Activated CD8-positive, alpha-beta T cell treated with anti-CD3 and anti-CD28 coated beads, Interleukin-2, amount 10 ng/mL, durations not matched to agents 7 days and 5 days (primary cell): ENCODE measurements at regions of chr12 and their contacts with region 1.

Region 1: DNA sequence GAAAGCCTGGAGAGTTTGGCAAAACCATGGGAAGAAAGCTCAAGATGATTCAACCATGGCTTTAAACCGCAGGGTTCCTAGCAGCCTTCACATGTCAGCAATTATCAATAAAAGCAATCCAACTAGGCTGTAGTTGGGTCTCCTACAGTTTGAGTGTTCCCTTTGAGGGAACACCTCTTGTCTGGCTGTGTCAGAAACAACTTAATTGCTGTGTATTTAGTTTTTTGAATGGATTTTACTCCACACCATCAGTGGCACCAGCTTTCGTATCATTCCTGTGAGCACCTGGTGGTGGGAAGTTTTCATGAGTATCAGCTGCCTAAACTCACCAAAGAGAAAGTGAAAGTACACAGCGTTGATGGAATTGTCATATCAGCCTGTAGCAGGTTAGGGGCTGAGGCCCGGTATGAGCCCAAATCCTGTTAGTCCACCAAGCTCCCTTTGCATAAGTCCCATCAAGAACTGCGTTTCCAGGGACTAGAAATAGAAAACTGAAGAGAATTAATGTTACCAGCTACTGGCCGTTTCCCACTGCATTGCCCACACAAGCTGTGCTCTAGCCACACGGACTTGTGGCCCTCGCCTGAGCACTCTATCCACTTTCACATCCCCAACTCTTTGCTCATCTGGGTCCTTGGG is 10.9 kb upstream of the IL26 start:
- DNase-seq: peak; percentile 57
- ATAC-seq: peak; percentile 78
- H3K4me3 Mint-ChIP-seq: peak overlapping the region; percentile 79
- H3K27ac Mint-ChIP-seq: peak overlapping the region; percentile 91
- H3K4me1 Mint-ChIP-seq: peaks cover 56% of the 10 kb centered on the region
- H3K27me3 Mint-ChIP-seq: no peaks in the 10 kb centered on the region

Region 2: DNA sequence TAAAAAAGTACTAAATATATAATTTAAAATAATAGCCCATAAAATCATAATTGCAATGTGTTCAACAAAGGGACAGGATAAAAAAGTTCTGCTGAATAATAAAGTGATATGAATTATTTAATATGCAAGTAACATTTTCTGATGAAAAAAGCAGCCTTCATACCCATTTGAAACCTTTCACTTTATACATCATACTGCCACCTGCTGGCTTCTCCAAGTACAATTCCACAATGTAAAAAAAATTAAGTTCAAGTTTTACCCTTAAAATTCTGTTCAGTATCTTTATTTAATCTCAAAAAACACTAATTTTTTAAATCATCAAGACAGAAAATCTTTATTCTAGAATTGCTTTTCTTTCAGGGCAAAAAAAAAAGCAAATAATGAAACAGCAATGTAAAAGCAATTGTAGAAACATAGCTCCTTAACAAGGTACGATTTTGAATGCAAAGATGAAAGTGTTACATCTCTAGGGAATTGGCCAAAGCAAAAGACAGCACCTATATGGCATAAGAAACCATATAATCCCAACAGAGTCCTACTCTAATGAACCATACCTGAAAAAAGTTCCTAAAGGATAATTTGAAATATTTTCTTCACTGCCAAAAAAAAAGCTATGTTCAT is 80.6 kb after region 1 on chr12:
- CTCF ChIA-PET with region 1: interaction called, 18 read pairs
- POLR2A ChIA-PET with region 1: no interaction called
- DNase-seq: peak; percentile 72
- ATAC-seq: no peak
- H3K4me3 Mint-ChIP-seq: no peak overlapping the region
- H3K27ac Mint-ChIP-seq: no peak overlapping the region
- H3K4me1 Mint-ChIP-seq: no peaks in the 10 kb centered on the region
- H3K27me3 Mint-ChIP-seq: no peaks in the 10 kb centered on the region

Region 3: DNA sequence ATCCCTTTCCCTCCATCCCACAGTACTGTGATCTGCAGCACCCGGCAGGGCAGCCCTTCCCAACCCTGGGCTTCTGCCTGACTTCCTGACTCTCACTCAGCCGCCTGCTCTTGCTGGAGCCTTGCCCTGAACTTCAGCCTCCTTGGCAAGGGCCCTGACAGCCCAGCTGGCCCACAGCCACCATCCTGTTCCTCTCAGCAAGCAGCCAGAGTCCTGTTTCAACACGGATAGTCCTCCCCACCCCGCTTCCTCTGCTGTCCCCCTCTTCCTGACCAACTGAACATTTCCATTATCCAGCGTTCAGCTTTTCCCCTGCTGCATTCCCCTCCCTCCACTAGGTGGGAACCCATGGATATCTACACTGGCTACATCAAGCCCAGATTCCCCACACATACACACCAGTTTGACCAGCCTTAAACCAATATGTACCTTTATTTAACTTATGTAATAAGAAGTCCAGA is 169.6 kb after region 1 on chr12:
- CTCF ChIA-PET with region 1: no interaction called
- POLR2A ChIA-PET with region 1: no interaction called
- DNase-seq: no peak
- ATAC-seq: no peak
- H3K4me3 Mint-ChIP-seq: no peak overlapping the region
- H3K27ac Mint-ChIP-seq: no peak overlapping the region
- H3K4me1 Mint-ChIP-seq: peaks cover 21% of the 10 kb centered on the region
- H3K27me3 Mint-ChIP-seq: peaks cover 5% of the 10 kb centered on the region